Caco-2 (cell line): ENCODE measurements at regions of chr2 and their contacts with region 1.

Region 1: DNA sequence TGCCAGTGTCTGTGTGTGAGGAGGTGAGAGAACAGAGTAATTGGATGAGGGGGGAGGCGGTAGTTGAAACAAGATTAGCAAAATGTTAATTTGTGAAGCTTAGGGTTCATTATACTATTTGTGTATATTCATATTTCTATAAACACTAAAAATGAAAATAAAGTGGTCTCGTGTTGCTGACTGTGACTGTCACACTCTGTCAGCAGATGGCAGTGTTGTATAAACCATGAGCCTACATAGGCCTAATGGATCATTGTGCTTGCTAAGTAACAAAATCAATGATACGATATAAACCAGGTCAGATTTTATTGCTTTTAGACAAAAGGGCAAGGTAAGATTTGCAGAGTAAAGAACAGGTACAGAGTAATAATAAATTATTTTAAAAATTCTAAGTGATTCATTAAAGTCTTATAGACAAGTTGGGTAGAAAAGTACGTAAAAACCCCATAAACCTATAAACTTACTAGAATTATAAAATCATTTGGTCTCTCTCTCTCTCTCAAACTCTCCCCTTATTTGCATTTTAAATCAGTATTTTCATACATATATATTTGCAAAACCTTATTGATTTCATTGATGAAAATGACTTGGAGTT is 182.7 kb downstream of the RPIA start:
- DNase-seq: peak in 1 of 2 experiments; percentile 58
- H3K4me3 ChIP-seq: no peak overlapping the region
- H3K4me3 Mint-ChIP-seq: no peak overlapping the region
- H3K27ac Mint-ChIP-seq: no peak overlapping the region
- H3K4me1 ChIP-seq: no peaks in the 10 kb centered on the region
- H3K4me1 Mint-ChIP-seq: no peaks in the 10 kb centered on the region
- H3K27me3 ChIP-seq: no peaks in the 10 kb centered on the region; the same call in 1 of the 2 replicates
- H3K27me3 Mint-ChIP-seq: peaks cover 17% of the 10 kb centered on the region
- CTCF ChIP-seq: peak; percentile 78 to 85

Region 2: DNA sequence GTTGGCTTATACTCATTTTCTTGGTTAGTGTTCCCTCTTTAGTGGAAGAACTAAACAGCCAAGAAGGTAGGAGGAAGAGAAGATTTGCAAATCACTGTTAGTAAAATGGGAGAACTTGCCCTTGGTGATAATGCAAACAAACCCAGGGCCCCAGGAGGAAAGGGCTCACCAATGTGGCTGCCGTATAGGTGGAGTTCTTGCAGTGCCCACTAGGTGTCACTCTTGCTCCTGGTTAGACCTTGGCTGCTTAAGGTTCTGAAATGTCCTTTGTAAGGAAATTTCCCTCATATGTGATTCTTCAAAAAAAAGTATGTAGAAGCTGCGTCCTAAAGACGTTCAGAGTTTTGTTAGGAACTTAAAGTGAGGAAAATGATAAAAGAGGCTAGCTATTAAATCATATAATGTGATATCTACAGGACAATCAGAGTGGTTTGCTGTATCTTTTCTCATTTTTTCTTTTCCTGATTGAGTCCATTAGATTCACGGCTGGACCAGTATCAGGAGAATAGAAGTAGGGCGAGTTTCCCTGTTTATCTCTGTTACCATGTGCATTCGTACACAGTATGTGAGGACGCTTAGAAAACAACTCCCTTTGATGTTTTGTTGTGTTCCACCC is 134.1 kb before region 1 on chr2:
- CTCF ChIA-PET with region 1: no interaction called
- POLR2A ChIA-PET with region 1: no interaction called
- intact Hi-C with region 1: loop called (anchors 2 kb)
- DNase-seq: peak; percentile 75 to 83
- H3K4me3 ChIP-seq: no peak overlapping the region
- H3K4me3 Mint-ChIP-seq: no peak overlapping the region
- H3K27ac Mint-ChIP-seq: no peak overlapping the region
- H3K4me1 ChIP-seq: no peaks in the 10 kb centered on the region
- H3K4me1 Mint-ChIP-seq: no peaks in the 10 kb centered on the region
- H3K27me3 ChIP-seq: no peaks in the 10 kb centered on the region
- H3K27me3 Mint-ChIP-seq: no peaks in the 10 kb centered on the region
- CTCF ChIP-seq: peak; percentile 88 to 92

Region 3: GRCh38 chr2:88765154-88765900 is 108.8 kb before region 1 on chr2:
- CTCF ChIA-PET with region 1: no interaction called
- POLR2A ChIA-PET with region 1: no interaction called
- intact Hi-C with region 1: no loop called
- DNase-seq: no peak
- H3K4me3 ChIP-seq: no peak overlapping the region
- H3K4me3 Mint-ChIP-seq: no peak overlapping the region
- H3K27ac Mint-ChIP-seq: no peak overlapping the region
- H3K4me1 ChIP-seq: no peaks in the 10 kb centered on the region
- H3K4me1 Mint-ChIP-seq: no peaks in the 10 kb centered on the region
- H3K27me3 ChIP-seq: no peaks in the 10 kb centered on the region
- H3K27me3 Mint-ChIP-seq: no peaks in the 10 kb centered on the region
- CTCF ChIP-seq: no peak

Region 4: DNA sequence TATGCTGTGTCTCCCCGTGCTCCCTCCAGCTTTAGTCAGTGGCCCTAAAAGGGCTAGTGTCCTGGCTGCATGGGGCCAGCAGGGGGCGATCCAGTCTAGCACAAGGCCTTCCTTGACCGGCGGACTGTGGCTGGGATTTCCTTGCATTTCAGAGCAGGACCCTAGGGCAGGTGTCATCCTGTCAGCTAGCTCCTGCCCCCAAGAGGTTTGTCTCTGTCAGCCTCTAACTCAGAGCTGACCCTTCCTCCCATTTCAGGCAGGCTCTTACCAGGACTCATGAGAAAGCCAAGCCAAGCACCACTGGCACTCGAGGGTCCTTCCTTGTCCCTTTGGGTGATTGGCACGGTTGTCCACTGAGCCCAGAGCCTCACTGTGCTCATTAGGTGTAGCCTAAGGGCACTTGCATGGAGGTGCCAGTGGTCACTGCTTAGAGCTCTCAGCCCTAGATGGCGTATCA is 42.3 kb before region 1 on chr2:
- CTCF ChIA-PET with region 1: no interaction called
- POLR2A ChIA-PET with region 1: no interaction called
- intact Hi-C with region 1: loop called (anchors 2 kb)
- DNase-seq: peak; percentile 60 to 64
- H3K4me3 ChIP-seq: no peak overlapping the region
- H3K4me3 Mint-ChIP-seq: no peak overlapping the region
- H3K27ac Mint-ChIP-seq: no peak overlapping the region
- H3K4me1 ChIP-seq: no peaks in the 10 kb centered on the region
- H3K4me1 Mint-ChIP-seq: no peaks in the 10 kb centered on the region
- H3K27me3 ChIP-seq: no peaks in the 10 kb centered on the region
- H3K27me3 Mint-ChIP-seq: peaks cover 5% of the 10 kb centered on the region
- CTCF ChIP-seq: peak; percentile 54 to 66

Region 5: DNA sequence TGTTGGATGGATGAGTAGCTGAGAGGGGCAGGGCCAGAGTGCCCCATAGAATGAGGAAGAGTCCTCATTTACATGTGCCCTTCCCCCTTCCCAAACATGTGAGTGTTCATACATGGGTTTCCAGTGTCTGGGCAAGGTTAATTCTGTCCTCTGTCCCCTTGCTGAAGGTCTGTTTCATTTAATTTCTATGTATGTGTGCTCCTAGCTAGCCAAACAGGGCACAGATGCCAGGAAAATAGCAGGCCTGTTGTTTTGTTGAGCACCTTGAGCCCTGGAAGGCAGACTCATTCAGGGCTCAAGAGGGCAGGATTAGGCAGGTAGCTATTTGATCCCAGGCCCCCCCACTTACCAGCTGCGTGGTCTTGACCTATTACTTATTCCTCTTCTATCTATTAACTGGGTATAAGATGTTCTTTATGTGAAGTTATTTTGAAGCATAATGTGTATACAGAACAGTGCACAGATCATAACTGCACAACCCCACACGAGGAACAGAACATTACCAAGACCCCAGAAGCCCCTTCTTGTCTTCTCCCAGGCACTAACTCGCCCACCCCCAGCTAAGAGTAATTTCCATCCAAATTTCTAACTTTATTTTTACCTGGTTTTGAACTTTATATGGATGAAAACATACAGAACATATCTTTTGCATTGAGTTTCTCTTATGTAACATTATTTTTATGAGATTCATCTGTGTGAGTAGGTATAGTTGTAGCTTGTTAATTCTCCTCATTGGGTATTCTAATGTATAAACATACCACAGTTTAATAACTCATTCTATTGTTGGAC is 18.3 kb before region 1 on chr2:
- CTCF ChIA-PET with region 1: no interaction called
- POLR2A ChIA-PET with region 1: no interaction called
- intact Hi-C with region 1: no loop called
- DNase-seq: no peak
- H3K4me3 ChIP-seq: no peak overlapping the region
- H3K4me3 Mint-ChIP-seq: no peak overlapping the region
- H3K27ac Mint-ChIP-seq: no peak overlapping the region
- H3K4me1 ChIP-seq: peaks cover 15% of the 10 kb centered on the region
- H3K4me1 Mint-ChIP-seq: peaks cover 13% of the 10 kb centered on the region
- H3K27me3 ChIP-seq: no peaks in the 10 kb centered on the region
- H3K27me3 Mint-ChIP-seq: peaks cover 10% of the 10 kb centered on the region
- CTCF ChIP-seq: no peak

Region 6: DNA sequence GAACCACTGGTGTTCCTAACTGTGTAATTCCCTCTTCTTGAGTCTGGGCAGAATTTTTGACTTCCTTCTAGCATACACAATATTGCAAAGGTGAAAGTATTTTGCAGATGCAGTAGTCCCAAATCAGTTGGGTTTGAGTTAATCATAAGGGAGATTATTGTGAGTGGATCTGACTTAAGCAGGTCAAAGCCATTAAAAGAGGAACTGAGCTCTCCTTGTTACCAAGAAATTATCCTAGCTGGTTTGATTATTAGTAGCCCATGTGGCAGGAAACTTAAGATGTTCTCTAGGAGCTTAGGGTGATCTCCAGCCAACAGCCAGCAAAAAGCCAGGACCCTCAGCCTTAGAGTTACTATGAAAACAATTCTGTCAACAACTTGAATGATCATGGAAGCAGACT is 39.1 kb after region 1 on chr2:
- CTCF ChIA-PET with region 1: no interaction called
- POLR2A ChIA-PET with region 1: no interaction called
- intact Hi-C with region 1: no loop called
- DNase-seq: no peak
- H3K4me3 ChIP-seq: no peak overlapping the region
- H3K4me3 Mint-ChIP-seq: no peak overlapping the region
- H3K27ac Mint-ChIP-seq: no peak overlapping the region
- H3K4me1 ChIP-seq: no peaks in the 10 kb centered on the region
- H3K4me1 Mint-ChIP-seq: no peaks in the 10 kb centered on the region
- H3K27me3 ChIP-seq: no peaks in the 10 kb centered on the region; the same call in 1 of the 2 replicates
- H3K27me3 Mint-ChIP-seq: peaks cover 21% of the 10 kb centered on the region
- CTCF ChIP-seq: no peak

Region 7: DNA sequence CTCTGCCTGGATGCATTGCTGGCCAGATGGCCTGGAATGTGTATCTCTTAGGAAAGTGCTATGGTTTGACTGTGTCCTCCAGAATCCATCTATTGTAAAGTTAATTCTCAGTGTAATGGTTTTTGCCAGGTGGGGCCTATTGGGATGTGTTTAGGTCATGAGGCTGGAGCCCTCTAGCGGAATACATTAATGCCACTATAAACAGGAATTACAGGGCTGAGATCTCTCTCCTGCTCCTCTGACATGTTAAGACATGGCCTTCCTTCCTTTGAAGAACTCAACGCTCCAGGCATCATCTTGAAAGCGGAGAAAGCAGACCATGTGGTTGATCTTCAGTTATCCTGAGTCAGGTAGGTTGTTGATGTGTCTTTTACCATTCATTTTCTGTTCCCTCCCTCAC is 93.7 kb after region 1 on chr2:
- CTCF ChIA-PET with region 1: no interaction called
- POLR2A ChIA-PET with region 1: no interaction called
- intact Hi-C with region 1: loop called (anchors 5 kb)
- DNase-seq: peak in 1 of 2 experiments; percentile 21
- H3K4me3 ChIP-seq: no peak overlapping the region
- H3K4me3 Mint-ChIP-seq: no peak overlapping the region
- H3K27ac Mint-ChIP-seq: no peak overlapping the region
- H3K4me1 ChIP-seq: no peaks in the 10 kb centered on the region
- H3K4me1 Mint-ChIP-seq: no peaks in the 10 kb centered on the region
- H3K27me3 ChIP-seq: no peaks in the 10 kb centered on the region; the same call in 1 of the 2 replicates
- H3K27me3 Mint-ChIP-seq: peaks cover 4% of the 10 kb centered on the region
- CTCF ChIP-seq: peak; percentile 39 to 49